HEK293T (cell line): ENCODE measurements at regions of chr18 and their contacts with region 1.

Region 1: GRCh38 chr18:22800551-22800951 is 132.6 kb upstream of the RBBP8 start:
- DNase-seq: no peak

Region 2: GRCh38 chr18:22778996-22779395 is 21.6 kb before region 1 on chr18:
- CTCF ChIA-PET with region 1: interaction called, 13 read pairs
- POLR2A ChIA-PET with region 1: no interaction called
- DNase-seq: no peak

Region 3: GRCh38 chr18:22813648-22814328 is 13.2 kb after region 1 on chr18:
- CTCF ChIA-PET with region 1: interaction called, 14 read pairs
- POLR2A ChIA-PET with region 1: no interaction called
- DNase-seq: peak; percentile 58